CD8-positive, alpha-beta T cell (primary cell): ENCODE measurements at regions of chr16 and their contacts with region 1.

Region 1: DNA sequence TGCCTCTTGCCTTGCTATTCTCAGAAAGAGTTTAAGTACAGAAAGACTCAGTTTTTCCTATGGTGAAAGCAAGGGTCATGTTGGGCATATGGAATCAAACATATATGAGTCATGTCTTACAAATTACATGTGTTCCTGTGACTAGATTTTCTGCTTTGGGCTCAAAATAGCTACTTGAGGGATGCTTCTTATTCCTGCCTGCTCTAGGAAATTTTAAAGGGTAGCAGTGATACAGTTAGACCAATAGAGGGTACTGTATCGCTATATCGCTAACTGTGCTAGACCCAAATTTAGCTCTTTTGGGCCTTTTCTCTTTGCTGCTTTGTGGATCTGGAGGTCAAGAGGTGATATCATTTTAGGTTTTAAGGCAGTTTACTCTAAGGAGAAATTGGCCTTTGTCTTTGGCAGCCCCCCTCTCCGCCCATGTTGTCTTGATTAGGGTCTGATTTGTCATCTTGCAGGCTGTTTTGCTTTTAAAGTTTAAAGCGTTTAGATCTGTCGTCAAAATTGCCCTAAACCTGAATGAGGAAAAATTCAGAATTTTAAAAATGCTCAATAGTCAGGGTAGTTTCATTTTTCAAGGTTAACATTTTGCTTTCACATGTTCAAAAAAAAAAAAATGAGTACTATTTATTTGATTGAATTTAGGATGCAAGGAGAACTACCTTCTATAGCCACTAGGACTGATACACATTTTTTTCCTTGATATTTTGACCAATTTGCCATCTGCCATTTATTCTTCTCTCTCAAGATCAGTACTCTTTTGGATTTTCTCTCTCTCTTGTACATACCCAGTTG is 8.8 kb downstream of the NFATC3 start:
- DNase-seq: peak in 2 of 9 experiments; percentile 54 to 69
- ATAC-seq: peak; percentile 88
- H3K4me3 ChIP-seq: no peak overlapping the region
- H3K4me3 Mint-ChIP-seq: peak overlapping the region; percentile 57
- H3K27ac ChIP-seq: peak overlapping the region in 1 of 2 experiments; percentile 38
- H3K27ac Mint-ChIP-seq: peak overlapping the region; percentile 87
- H3K4me1 ChIP-seq: peaks cover 89% of the 10 kb centered on the region
- H3K4me1 Mint-ChIP-seq: peaks cover 83% of the 10 kb centered on the region
- H3K27me3 ChIP-seq: no peaks in the 10 kb centered on the region
- H3K27me3 Mint-ChIP-seq: no peaks in the 10 kb centered on the region
- CTCF ChIP-seq: peak; percentile 69

Region 2: DNA sequence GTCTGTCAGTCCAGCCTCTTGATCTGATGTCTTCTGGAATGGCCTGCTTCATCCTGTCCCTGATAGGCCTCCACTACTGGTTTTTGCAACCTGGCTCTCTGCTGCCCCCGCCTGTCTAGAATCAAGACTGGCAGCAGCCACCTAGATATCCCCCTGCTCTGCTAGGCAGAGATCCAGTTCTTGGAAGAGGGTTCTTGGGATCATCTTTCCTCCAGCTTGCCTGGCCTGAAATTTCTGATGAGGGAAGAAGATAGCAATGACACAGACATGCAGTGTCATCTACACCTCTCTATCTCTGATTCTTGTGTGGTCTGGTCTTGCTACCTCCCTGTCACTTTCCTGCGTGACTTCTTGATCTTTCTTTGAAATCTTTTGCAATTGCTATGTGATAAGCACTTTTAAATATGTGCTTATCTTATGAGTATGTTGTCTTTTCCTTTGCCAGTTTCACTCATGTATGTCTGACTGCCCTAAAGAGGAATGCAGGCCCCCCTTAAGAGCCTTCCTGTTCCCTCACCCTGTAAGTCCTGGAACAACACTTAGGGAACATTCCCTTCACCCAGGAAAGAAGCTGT is 29.1 kb before region 1 on chr16:
- CTCF ChIA-PET with region 1: interaction called, 11 read pairs
- POLR2A ChIA-PET with region 1: interaction called, 3 read pairs
- intact Hi-C with region 1: no loop called
- DNase-seq: peak; percentile 39 to 86 (median 73)
- ATAC-seq: peak; percentile 82
- H3K4me3 ChIP-seq: no peak overlapping the region
- H3K4me3 Mint-ChIP-seq: no peak overlapping the region
- H3K27ac ChIP-seq: peak overlapping the region in 1 of 2 experiments; percentile 58
- H3K27ac Mint-ChIP-seq: peak overlapping the region; percentile 92
- H3K4me1 ChIP-seq: peaks cover 72% of the 10 kb centered on the region
- H3K4me1 Mint-ChIP-seq: peaks cover 76% of the 10 kb centered on the region
- H3K27me3 ChIP-seq: no peaks in the 10 kb centered on the region
- H3K27me3 Mint-ChIP-seq: no peaks in the 10 kb centered on the region
- CTCF ChIP-seq: peak; percentile 85

Region 3: DNA sequence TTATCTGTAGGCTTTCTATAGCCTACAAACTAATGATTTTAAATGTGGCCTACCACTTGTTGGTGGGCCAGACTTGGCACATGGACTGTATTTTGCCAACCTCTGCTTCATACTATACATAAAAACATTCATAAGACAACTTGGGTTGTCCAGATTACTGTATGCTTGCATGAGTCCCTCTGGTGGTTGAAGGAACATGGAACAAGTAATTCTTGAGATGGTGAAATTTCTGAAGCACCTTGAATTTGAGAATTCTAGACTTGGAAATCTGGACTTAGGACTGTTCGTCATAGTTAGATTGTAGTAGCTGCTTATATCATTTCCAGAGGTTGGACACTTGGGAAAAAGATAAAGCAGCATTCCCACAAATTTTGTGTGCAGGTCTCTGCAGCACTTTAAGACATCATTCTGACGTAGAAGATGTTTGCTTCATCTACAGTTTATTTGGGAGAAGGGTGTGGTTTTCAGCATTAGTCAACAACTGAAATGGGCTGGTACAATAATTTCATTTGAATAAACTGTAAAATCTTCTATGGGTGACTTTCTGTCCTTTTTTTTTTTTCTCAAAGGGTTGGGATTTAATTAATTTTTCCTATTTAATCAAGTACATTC is 22.3 kb after region 1 on chr16:
- CTCF ChIA-PET with region 1: interaction called, 16 read pairs
- POLR2A ChIA-PET with region 1: interaction called, 3 read pairs
- intact Hi-C with region 1: loop called (anchors 1 to 2 kb)
- DNase-seq: peak in 2 of 9 experiments; percentile 59 to 72
- ATAC-seq: peak; percentile 75
- H3K4me3 ChIP-seq: no peak overlapping the region
- H3K4me3 Mint-ChIP-seq: peak overlapping the region; percentile 51
- H3K27ac ChIP-seq: no peak overlapping the region
- H3K27ac Mint-ChIP-seq: peak overlapping the region; percentile 67
- H3K4me1 ChIP-seq: peaks cover 88% of the 10 kb centered on the region
- H3K4me1 Mint-ChIP-seq: peaks cover 84% of the 10 kb centered on the region
- H3K27me3 ChIP-seq: no peaks in the 10 kb centered on the region
- H3K27me3 Mint-ChIP-seq: no peaks in the 10 kb centered on the region
- CTCF ChIP-seq: peak; percentile 77

Region 4: DNA sequence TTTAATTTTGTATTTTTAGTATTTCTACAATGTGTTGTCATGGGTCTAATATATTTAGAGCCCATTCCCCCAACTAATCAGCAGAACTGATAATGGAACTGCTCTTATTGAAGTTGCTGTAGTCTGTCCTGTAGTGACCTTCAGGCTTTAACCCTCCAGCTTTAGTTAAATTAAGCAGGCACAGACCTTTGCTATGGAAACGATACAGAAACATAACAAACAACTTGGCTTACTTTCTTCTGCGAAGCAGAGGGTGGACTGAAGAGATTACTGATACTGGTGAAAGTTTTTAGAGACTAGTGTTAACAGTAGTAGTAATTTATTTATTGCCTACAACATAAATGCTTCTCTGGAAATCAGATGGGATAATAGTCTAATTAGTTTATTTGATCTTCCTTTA is 52.6 kb after region 1 on chr16:
- CTCF ChIA-PET with region 1: interaction called, 4 read pairs
- POLR2A ChIA-PET with region 1: no interaction called
- intact Hi-C with region 1: loop called in 1 of 2 experiments (anchors 5 kb)
- DNase-seq: peak in 1 of 9 experiments; percentile 23
- ATAC-seq: no peak
- H3K4me3 ChIP-seq: no peak overlapping the region
- H3K4me3 Mint-ChIP-seq: no peak overlapping the region
- H3K27ac ChIP-seq: no peak overlapping the region
- H3K27ac Mint-ChIP-seq: peak overlapping the region; percentile 60
- H3K4me1 ChIP-seq: peaks cover 11% of the 10 kb centered on the region
- H3K4me1 Mint-ChIP-seq: peaks cover 52% of the 10 kb centered on the region
- H3K27me3 ChIP-seq: no peaks in the 10 kb centered on the region
- H3K27me3 Mint-ChIP-seq: no peaks in the 10 kb centered on the region
- CTCF ChIP-seq: no peak

Region 5: DNA sequence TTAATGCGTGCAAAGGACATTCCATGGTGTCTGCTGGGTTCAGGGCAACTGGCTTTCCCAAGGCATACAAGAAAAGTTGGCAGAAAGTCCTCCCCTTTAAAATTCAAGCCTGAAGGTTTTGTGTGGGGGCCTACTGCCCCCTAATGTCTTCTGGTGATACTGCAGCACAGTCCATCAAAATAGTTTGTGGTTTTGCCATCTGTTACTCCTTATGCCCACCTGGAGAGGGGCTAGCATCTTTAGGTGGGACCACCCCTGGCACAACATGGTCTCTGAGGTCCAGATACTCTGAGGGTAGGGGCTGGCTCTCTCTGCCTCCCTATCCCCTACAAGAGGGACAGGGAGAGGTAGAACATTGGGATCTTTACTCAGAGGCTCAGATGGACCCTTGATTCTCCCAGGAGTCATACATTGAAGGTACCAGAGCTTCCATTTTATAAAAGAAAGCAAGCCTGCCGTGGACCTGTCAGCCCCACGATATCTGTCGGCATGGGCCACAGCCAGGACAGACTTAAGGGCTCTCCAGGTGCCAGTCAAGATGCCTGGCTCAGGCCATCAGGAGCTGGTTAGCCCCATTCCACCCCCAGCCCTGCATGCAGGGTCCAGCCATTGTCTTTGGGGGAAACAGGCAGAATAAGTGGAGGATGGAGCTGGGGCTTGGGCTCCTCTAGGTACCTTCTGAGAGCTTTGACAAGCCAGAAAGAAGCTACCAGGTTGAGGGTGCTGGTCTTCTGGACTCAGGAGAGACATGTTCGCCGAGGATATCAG is 135.6 kb after region 1 on chr16:
- CTCF ChIA-PET with region 1: interaction called, 59 read pairs
- POLR2A ChIA-PET with region 1: no interaction called
- intact Hi-C with region 1: loop called (anchors 1 to 2 kb)
- DNase-seq: peak in 6 of 9 experiments; percentile 36 to 72 (median 56)
- ATAC-seq: peak; percentile 64
- H3K4me3 ChIP-seq: no peak overlapping the region
- H3K4me3 Mint-ChIP-seq: no peak overlapping the region
- H3K27ac ChIP-seq: no peak overlapping the region
- H3K27ac Mint-ChIP-seq: peak overlapping the region; percentile 53
- H3K4me1 ChIP-seq: peaks cover 20% of the 10 kb centered on the region
- H3K4me1 Mint-ChIP-seq: peaks cover 41% of the 10 kb centered on the region
- H3K27me3 ChIP-seq: no peaks in the 10 kb centered on the region
- H3K27me3 Mint-ChIP-seq: no peaks in the 10 kb centered on the region
- CTCF ChIP-seq: peak; percentile 81

Region 6: DNA sequence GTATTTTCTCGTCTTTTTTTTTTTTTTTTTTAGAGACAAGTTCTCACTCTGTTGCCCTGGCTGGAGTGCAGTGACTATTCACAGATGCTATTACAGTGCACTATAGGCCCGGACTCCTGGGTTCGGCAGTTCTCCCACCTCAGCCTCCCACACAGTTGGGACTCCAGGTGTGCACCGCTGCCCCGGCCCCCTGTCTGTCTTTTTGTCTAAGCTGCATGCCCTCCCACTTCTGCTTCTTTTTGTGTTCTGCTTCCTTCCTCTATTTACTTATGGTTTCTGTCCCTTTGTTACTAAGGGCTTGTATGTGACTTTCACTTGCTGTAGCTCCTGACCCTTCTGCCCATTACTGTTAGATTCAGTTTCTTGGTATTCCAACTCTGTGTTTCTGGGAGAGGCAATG is 190.8 kb after region 1 on chr16:
- CTCF ChIA-PET with region 1: no interaction called
- POLR2A ChIA-PET with region 1: no interaction called
- intact Hi-C with region 1: no loop called
- DNase-seq: peak in 2 of 9 experiments; percentile 29 to 45
- ATAC-seq: peak; percentile 2
- H3K4me3 ChIP-seq: peak overlapping the region; percentile 10 to 39
- H3K4me3 Mint-ChIP-seq: peak overlapping the region; percentile 83
- H3K27ac ChIP-seq: peak overlapping the region; percentile 41 to 82
- H3K27ac Mint-ChIP-seq: peak overlapping the region; percentile 88
- H3K4me1 ChIP-seq: peaks cover 100% of the 10 kb centered on the region
- H3K4me1 Mint-ChIP-seq: peaks cover 91% of the 10 kb centered on the region
- H3K27me3 ChIP-seq: no peaks in the 10 kb centered on the region
- H3K27me3 Mint-ChIP-seq: no peaks in the 10 kb centered on the region
- CTCF ChIP-seq: no peak